GM12878 (cell line): ENCODE measurements at regions of chr4 and their contacts with region 1.

Region 1: DNA sequence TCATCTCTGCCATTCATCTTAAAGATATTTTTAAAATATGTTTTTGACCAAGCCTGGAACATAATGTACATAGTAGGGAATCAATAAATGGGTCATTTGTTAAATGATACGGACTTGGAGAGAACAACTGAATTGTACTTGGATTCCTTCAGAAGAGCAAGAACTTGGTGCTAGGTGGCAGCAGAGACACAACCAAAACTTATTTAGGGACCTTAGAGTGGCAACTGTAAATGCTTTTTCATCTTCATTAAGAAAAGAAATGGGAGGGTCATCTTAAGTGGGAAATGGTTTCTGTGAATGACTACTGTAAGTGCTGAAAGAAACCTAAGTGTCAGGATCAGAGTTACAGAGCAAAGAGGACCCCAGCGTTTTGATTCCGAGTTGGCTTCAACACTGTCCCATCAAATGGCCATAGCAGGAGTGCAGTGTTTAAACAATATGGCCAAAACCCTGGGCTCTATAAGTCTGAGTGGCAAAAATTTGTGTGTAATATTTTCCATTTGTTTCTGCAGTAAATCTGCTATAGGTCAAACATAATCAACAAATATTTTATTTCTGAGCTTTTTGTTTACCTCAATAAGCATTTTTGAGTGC is 213.6 kb downstream of the PALLD start:
- DNase-seq: no peak
- ATAC-seq: peak; percentile 54
- H3K4me3 ChIP-seq: no peak overlapping the region
- H3K27ac ChIP-seq: no peak overlapping the region
- H3K4me1 ChIP-seq: no peaks in the 10 kb centered on the region
- H3K27me3 ChIP-seq: no peaks in the 10 kb centered on the region; a peak in 1 of 4 replicates
- CTCF ChIP-seq: peak; percentile 9 to 57 (median 26); a peak in 4 of 6 replicates
- EP300 ChIP-seq: no peak
- POLR2A ChIP-seq: no peak
- RAD21 ChIP-seq: peak; percentile 34

Region 2: DNA sequence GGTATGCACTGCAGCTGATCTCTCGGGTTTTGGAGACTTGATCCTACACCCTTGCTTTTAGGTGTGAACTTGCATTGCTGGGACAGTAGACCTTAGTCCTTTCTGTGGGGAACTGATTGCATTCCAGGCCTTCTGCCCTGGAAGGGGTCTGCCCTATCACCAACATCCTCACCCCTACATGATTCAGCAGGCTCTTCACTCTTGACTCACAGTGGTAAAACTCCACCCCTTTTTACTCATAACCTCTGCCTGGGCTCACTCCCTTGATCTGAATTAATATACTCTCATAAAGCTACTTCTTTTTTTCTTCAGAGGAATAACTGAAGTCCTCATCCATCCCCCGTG is 223.5 kb before region 1 on chr4:
- CTCF ChIA-PET with region 1: no interaction called
- POLR2A ChIA-PET with region 1: no interaction called
- RAD21 ChIA-PET with region 1: no interaction called
- SMC1A ChIA-PET with region 1: no interaction called
- in situ Hi-C with region 1: no loop called
- intact Hi-C with region 1: no loop called
- DNase-seq: no peak
- ATAC-seq: peak; percentile 21; the same call in 1 of the 3 replicates
- H3K4me3 ChIP-seq: no peak overlapping the region
- H3K27ac ChIP-seq: no peak overlapping the region
- H3K4me1 ChIP-seq: no peaks in the 10 kb centered on the region
- H3K27me3 ChIP-seq: no peaks in the 10 kb centered on the region; a peak in 1 of 4 replicates
- CTCF ChIP-seq: no peak
- EP300 ChIP-seq: no peak
- POLR2A ChIP-seq: no peak
- RAD21 ChIP-seq: no peak

Region 3: DNA sequence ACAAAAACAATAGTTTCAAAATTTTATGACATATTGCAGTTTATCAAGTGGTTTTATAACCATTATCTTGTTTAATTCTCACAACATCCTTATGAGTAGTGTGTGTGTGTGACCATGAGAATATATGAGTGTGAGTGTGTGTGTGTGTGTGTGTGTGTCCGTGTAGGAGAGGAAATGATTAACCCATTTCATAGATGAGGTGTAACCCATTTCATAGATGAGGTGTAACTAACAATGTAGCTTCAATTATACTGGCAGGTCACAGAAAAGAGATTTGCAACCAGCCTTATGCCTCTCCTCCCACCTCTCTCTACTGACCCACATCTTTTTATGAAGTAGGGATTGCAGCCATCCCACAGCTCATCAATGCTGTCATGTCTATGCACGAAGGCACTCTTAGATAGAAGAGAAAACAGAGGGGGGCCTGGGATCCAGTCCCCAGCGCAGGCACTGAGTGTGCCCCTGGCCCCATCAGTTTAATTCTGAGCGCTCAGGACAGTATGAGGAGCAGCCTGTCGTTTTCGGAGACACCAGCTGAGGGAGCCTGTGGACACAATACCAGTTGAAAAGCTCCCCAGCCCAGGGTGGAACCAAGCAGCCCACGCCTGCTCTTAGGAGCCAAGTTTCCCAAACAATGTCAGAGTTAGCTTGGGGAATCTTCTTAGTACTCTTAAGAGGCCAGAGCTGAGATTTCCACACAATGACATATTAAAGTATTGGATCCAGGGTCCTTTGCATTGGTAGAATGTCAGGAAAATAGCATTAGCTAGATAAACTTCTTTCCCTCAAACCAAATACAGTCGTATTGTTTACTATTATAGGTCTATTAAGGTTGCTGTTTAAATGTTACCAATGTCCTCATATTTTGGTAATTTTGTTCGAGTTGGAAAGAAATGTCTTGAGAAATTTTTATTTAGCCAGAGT is 125.0 kb before region 1 on chr4:
- CTCF ChIA-PET with region 1: interaction called, 30 read pairs
- POLR2A ChIA-PET with region 1: interaction called, 3 read pairs
- RAD21 ChIA-PET with region 1: interaction called, 4 read pairs
- SMC1A ChIA-PET with region 1: interaction called, 26 read pairs
- in situ Hi-C with region 1: no loop called
- intact Hi-C with region 1: loop called (anchors 5 kb)
- DNase-seq: no peak
- ATAC-seq: peak; percentile 98
- H3K4me3 ChIP-seq: no peak overlapping the region
- H3K27ac ChIP-seq: no peak overlapping the region
- H3K4me1 ChIP-seq: no peaks in the 10 kb centered on the region
- H3K27me3 ChIP-seq: no peaks in the 10 kb centered on the region
- CTCF ChIP-seq: peak; percentile 38 to 63 (median 63); a peak in 5 of 6 replicates
- EP300 ChIP-seq: no peak
- POLR2A ChIP-seq: no peak
- RAD21 ChIP-seq: peak; percentile 47

Region 4: GRCh38 chr4:168737809-168738176 is 27.3 kb after region 1 on chr4:
- CTCF ChIA-PET with region 1: interaction called, 32 read pairs
- POLR2A ChIA-PET with region 1: no interaction called
- RAD21 ChIA-PET with region 1: interaction called, 21 read pairs
- SMC1A ChIA-PET with region 1: interaction called, 42 read pairs
- in situ Hi-C with region 1: no loop called
- intact Hi-C with region 1: no loop called
- DNase-seq: no peak
- ATAC-seq: peak; percentile 80
- H3K4me3 ChIP-seq: no peak overlapping the region
- H3K27ac ChIP-seq: no peak overlapping the region
- H3K4me1 ChIP-seq: no peaks in the 10 kb centered on the region
- H3K27me3 ChIP-seq: no peaks in the 10 kb centered on the region
- CTCF ChIP-seq: no peak
- EP300 ChIP-seq: peak in 1 of 2 experiments; percentile 41; a peak in 1 of 4 replicates
- POLR2A ChIP-seq: no peak
- RAD21 ChIP-seq: no peak

Region 5: GRCh38 chr4:168815379-168816345 is 105.2 kb after region 1 on chr4:
- CTCF ChIA-PET with region 1: interaction called, 10 read pairs
- POLR2A ChIA-PET with region 1: interaction called, 3 read pairs
- RAD21 ChIA-PET with region 1: interaction called, 6 read pairs
- SMC1A ChIA-PET with region 1: interaction called, 21 read pairs
- in situ Hi-C with region 1: no loop called
- intact Hi-C with region 1: no loop called
- DNase-seq: no peak
- ATAC-seq: no peak
- H3K4me3 ChIP-seq: no peak overlapping the region
- H3K27ac ChIP-seq: no peak overlapping the region
- H3K4me1 ChIP-seq: no peaks in the 10 kb centered on the region
- H3K27me3 ChIP-seq: peaks cover 2 to 8% of the 10 kb centered on the region in 2 experiments; a peak in 3 of 4 replicates
- CTCF ChIP-seq: no peak
- EP300 ChIP-seq: no peak
- POLR2A ChIP-seq: no peak
- RAD21 ChIP-seq: no peak

Region 6: GRCh38 chr4:168859888-168860694 is 149.6 kb after region 1 on chr4:
- CTCF ChIA-PET with region 1: interaction called, 6 read pairs
- POLR2A ChIA-PET with region 1: no interaction called
- RAD21 ChIA-PET with region 1: no interaction called
- SMC1A ChIA-PET with region 1: interaction called, 10 read pairs
- in situ Hi-C with region 1: no loop called
- intact Hi-C with region 1: no loop called
- DNase-seq: peak; percentile 33
- ATAC-seq: peak; percentile 95
- H3K4me3 ChIP-seq: no peak overlapping the region
- H3K27ac ChIP-seq: no peak overlapping the region
- H3K4me1 ChIP-seq: peaks cover 3% of the 10 kb centered on the region
- H3K27me3 ChIP-seq: no peaks in the 10 kb centered on the region
- CTCF ChIP-seq: no peak
- EP300 ChIP-seq: peak; percentile 38 to 80; a peak in 2 of 4 replicates
- POLR2A ChIP-seq: no peak
- RAD21 ChIP-seq: no peak

Region 7: DNA sequence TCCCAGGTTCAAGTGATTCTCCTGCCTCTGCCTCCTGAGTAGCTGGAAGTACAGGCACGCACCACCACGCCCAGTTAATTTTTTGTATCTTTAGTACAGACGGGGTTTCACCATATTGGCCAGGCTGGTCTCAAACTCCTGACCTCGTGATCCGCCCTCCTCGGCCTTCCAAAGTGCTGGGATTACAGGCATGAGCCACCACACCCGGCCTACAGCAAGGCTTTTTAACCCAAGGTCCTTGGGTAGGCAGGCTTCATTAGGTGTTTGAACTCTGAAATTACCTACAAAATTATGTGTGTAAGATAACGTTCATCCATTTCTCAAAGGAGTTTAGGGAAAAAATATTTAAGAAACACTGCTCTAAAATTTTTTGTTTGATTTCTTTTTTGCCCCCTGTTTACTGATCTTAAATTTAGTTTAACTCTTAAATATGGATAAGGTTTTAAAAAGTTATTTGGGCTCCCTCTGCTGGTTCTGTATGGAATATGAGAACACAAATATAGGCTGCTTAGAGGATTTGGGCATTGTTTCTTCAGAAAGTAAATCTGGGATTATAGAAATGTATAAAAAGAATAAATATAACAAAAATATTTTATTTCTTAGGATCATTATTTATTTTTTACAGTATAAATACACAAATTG is 206.8 kb after region 1 on chr4:
- CTCF ChIA-PET with region 1: interaction called, 362 read pairs
- POLR2A ChIA-PET with region 1: interaction called, 5 read pairs
- RAD21 ChIA-PET with region 1: interaction called, 116 read pairs
- SMC1A ChIA-PET with region 1: interaction called, 292 read pairs
- in situ Hi-C with region 1: no loop called
- intact Hi-C with region 1: loop called (anchors 1 kb)
- DNase-seq: no peak
- ATAC-seq: peak; percentile 80
- H3K4me3 ChIP-seq: no peak overlapping the region
- H3K27ac ChIP-seq: no peak overlapping the region
- H3K4me1 ChIP-seq: no peaks in the 10 kb centered on the region
- H3K27me3 ChIP-seq: no peaks in the 10 kb centered on the region
- CTCF ChIP-seq: peak; percentile 37 to 52 (median 41); a peak in 4 of 6 replicates
- EP300 ChIP-seq: no peak
- POLR2A ChIP-seq: no peak
- RAD21 ChIP-seq: peak; percentile 69